Upper lobe of right lung (tissue), 1 donor: ENCODE measurements at regions of chr19 and their contacts with region 1.

Region 1: DNA sequence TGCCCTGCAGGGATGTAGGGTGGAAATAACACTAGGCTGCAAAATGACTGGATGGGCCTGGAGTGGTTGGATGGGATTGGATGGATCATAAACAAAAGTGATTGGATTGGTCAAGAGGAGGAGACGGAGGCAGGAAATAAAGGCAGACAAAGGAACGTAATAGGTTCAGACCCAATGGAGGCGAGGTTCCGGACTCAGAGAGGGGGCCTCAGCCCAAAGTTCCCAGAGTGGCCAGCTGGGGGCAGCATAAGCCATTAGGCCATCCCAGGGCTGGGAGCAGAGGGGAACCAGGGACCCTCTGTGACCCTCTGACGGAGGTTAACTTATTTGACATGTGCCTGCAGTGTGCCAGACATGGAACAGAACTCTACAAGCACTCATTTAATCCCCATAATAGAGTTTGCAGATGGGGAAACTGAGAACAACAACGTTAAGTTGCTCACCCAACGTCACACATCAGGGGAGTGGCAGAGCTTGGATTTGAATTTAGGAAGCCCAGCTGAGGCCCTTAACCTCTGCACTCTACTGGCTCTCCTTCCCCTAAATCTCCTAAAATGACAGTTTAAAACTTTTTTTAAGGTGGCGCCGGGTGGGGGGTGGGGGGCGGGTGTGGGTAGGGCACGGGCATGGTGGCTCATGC is 15.3 kb upstream of the MAP1S start:
- DNase-seq: peak; percentile 74
- ATAC-seq: peak; percentile 92
- H3K4me3 ChIP-seq: no peak overlapping the region
- H3K27ac ChIP-seq: no peak overlapping the region
- H3K4me1 ChIP-seq: no peaks in the 10 kb centered on the region
- H3K27me3 ChIP-seq: no peaks in the 10 kb centered on the region
- CTCF ChIP-seq: peak; percentile 91

Region 2: GRCh38 chr19:17282488-17283255 is 421.3 kb before region 1 on chr19:
- intact Hi-C with region 1: no loop called
- DNase-seq: peak; percentile 92
- ATAC-seq: peak; percentile 98
- H3K4me3 ChIP-seq: peak overlapping the region; percentile 31
- H3K27ac ChIP-seq: no peak overlapping the region
- H3K4me1 ChIP-seq: peaks cover 16% of the 10 kb centered on the region
- H3K27me3 ChIP-seq: peaks cover 18% of the 10 kb centered on the region
- CTCF ChIP-seq: peak; percentile 95

Region 3: DNA sequence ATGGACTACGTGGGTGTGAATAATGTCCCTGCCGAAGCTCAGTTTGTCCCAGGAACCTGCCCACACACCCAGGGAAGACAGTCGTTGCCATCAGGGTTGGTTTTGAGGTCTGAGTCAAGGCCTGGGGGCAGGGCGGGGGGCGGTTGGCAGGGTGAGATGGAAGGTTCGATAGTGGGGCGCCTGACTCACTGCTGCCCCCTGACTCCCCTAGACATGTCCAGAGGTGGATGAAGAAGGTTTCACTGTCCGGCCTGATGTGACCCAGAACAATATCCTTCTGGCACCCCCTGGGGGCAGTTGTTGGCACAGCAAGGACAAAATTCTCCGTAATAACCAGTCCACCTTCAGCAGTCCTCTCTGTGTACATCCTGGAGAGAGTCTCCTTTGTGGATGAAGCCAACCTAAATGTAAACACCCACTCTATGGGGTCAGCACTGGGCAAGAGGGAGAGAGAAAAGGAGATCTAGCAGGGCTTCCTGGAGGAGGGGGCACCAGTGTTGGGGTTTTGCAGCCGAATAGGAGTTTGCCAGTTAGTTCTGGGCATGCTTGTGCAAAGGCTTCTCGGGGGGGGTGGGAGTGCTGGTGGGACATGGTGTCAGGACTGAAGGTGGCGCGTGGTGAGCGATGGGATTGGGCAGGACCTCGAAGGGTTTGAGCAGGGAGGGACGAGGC is 71.4 kb after region 1 on chr19:
- intact Hi-C with region 1: loop called (anchors 10 kb)
- DNase-seq: no peak
- ATAC-seq: peak; percentile 4
- H3K4me3 ChIP-seq: no peak overlapping the region
- H3K27ac ChIP-seq: no peak overlapping the region
- H3K4me1 ChIP-seq: peaks cover 5% of the 10 kb centered on the region
- H3K27me3 ChIP-seq: peaks cover 6% of the 10 kb centered on the region
- CTCF ChIP-seq: peak; percentile 49